Gastrocnemius medialis (tissue), 4 donors: ENCODE measurements at regions of chr21 and their contacts with region 1.

Region 1: DNA sequence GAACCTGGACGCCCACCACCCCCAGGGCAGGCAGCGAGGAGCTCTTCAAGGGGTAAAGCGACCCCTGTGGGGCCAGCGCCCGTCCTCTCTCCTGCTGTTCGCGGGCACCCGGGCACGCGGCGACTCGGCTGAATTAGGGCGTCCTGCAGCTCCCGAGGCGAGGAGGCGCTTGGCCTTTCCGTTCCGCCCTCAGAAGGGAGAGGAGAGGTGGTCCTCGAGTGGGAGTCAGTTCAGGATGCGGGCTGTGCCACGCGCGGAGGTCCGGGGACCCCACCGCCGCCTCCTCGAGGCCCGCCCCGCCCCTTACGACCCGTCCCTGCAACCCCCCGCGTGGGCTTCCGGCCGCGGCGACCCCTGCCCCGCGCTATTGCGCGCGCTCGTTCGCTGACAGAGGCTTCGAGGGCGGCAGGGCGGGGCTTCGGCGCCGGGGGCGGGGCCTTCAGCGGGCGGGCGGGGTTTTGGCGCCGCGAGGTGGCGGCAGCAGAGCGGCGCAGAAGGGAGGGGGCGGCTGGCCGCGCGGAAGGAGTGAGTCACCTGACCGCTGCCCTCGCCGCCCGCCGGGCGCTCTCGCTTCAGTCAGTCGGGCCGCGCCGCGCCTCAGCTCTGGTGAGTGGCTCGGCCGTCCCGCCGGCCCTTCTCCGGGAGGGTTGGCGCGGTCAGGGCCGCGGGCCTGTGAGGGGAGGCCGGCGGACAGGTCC is at the start of gene BACH1:
- DNase-seq: peak; percentile 76 to 89
- ATAC-seq: peak; percentile 69 to 72
- H3K4me3 ChIP-seq: peak within 1 kb of the TSS; percentile 69 to 87 (median 72)
- H3K27ac ChIP-seq: peak within 1 kb of the TSS; percentile 89 to 97 (median 94)
- H3K4me1 ChIP-seq: peaks cover 34 to 36% of the 10 kb centered on the region in 2 donors
- H3K27me3 ChIP-seq: no peaks in the 10 kb centered on the region
- CTCF ChIP-seq: peak in 3 of 5 experiments; percentile 55 to 69 (median 64)
- POLR2A ChIP-seq: peak; percentile 93 to 94
- total RNA-seq, gene BACH1: 52.4 to 72.7 (median 62.7) TPM

Region 2: GRCh38 chr21:28793043-28793442 is 505.5 kb before region 1 on chr21:
- in situ Hi-C with region 1: no loop called
- intact Hi-C with region 1: no loop called
- DNase-seq: no peak
- ATAC-seq: no peak
- H3K4me3 ChIP-seq: no peak overlapping the region
- H3K27ac ChIP-seq: no peak overlapping the region
- H3K4me1 ChIP-seq: no peaks in the 10 kb centered on the region
- H3K27me3 ChIP-seq: no peaks in the 10 kb centered on the region
- CTCF ChIP-seq: peak in 1 of 5 experiments; percentile 23
- POLR2A ChIP-seq: no peak

Region 3: GRCh38 chr21:29073222-29074006 is 225.1 kb before region 1 on chr21 and contains the start of gene CCT8:
- in situ Hi-C with region 1: loop called in 1 of 4 experiments (anchors 25 kb)
- intact Hi-C with region 1: loop called (anchors 5 kb)
- DNase-seq: peak; percentile 99
- ATAC-seq: peak; percentile 97
- H3K4me3 ChIP-seq: peak within 1 kb of the TSS; percentile 89 to 100 (median 100)
- H3K27ac ChIP-seq: peak within 1 kb of the TSS; percentile 94 to 99 (median 98)
- H3K4me1 ChIP-seq: peaks cover 27 to 29% of the 10 kb centered on the region in 2 donors
- H3K27me3 ChIP-seq: no peaks in the 10 kb centered on the region
- CTCF ChIP-seq: peak in 1 of 5 experiments; percentile 15
- POLR2A ChIP-seq: peak; percentile 71 to 83
- total RNA-seq, gene CCT8: 91.8 to 119 (median 99.1) TPM

Region 4: GRCh38 chr21:29085106-29085752 is 213.3 kb before region 1 on chr21:
- in situ Hi-C with region 1: loop called in 2 of 4 experiments (anchors 10 to 25 kb)
- intact Hi-C with region 1: loop called (anchors 5 kb)
- DNase-seq: no peak
- ATAC-seq: no peak
- H3K4me3 ChIP-seq: no peak overlapping the region
- H3K27ac ChIP-seq: no peak overlapping the region
- H3K4me1 ChIP-seq: no peaks in the 10 kb centered on the region
- H3K27me3 ChIP-seq: no peaks in the 10 kb centered on the region
- CTCF ChIP-seq: no peak
- POLR2A ChIP-seq: no peak

Region 5: DNA sequence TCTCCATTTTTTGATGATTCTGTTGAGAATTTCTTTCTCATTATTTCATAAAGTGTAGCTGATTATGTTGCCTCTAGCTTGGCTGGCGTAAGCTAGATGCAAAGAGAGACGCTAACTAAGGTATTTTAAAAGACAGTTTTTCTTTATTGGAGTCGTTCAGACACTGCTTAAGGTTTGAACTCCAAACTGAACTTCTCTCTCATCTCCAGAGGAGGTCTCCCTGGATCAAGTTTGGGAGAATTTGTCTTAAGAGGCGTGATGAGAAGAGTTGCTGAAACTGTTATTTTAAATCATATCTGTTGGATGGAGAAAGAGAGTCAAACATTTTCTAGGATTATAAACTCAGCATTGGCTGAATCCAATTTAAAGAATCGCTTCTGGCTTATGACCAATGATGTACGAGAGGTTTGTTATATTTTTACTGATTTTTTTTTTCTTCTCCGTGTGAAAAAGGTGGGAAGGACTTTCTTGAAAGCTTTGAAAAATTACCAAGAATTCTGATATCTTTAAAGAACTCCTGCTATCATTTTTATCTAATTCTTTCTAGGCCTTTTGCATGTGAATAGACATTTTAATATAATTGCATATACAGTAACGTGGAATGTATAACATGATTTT is 134.1 kb before region 1 on chr21:
- in situ Hi-C with region 1: loop called in 1 of 4 experiments (anchors 25 kb)
- intact Hi-C with region 1: no loop called
- DNase-seq: no peak
- ATAC-seq: peak; percentile 82 to 85
- H3K4me3 ChIP-seq: no peak overlapping the region
- H3K27ac ChIP-seq: peak overlapping the region in 1 of 4 donors; percentile 32
- H3K4me1 ChIP-seq: peaks cover 4 to 9% of the 10 kb centered on the region in 2 donors
- H3K27me3 ChIP-seq: no peaks in the 10 kb centered on the region
- CTCF ChIP-seq: peak in 4 of 5 experiments; percentile 51 to 66 (median 64)
- POLR2A ChIP-seq: no peak

Region 6: DNA sequence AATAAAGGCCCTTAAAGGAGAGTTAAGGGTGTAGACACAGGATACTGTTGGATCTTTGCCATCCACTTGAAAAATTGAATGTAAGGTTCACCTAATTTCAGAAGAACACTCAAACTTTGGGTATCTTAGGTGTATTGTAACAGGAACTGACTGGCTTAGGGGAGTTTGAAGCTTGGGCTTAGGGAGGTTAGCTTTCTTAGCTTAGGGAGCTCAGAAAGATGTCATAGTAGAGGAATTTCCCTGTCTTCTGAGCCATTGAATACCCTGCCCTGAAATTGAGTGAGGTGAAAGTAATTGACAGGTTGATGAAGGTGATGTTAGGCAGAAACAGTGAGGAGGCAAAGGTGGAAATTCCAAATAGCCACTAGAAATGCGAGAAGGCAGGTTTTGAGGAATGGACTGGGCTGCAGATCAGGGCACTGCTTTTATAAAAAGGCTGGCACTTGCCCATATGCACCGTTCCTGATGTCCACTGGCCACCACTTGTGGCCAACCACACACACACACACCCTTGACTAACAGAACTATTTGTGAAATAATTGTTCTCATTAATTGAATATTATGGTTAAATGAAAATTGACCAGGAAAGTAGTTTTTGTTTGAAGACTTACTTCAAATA is 16.7 kb after region 1 on chr21:
- in situ Hi-C with region 1: no loop called
- intact Hi-C with region 1: no loop called
- DNase-seq: no peak
- ATAC-seq: peak in 1 of 2 donors; percentile 58
- H3K4me3 ChIP-seq: peak overlapping the region in 1 of 4 donors; percentile 5
- H3K27ac ChIP-seq: peak overlapping the region; percentile 15 to 49 (median 34)
- H3K4me1 ChIP-seq: peaks cover 80 to 93% of the 10 kb centered on the region in 2 donors
- H3K27me3 ChIP-seq: no peaks in the 10 kb centered on the region
- CTCF ChIP-seq: no peak
- POLR2A ChIP-seq: no peak

Region 7: GRCh38 chr21:29326914-29327554 is 28.5 kb after region 1 on chr21:
- in situ Hi-C with region 1: no loop called
- intact Hi-C with region 1: loop called (anchors 1 kb)
- DNase-seq: peak; percentile 84 to 92
- ATAC-seq: peak; percentile 98
- H3K4me3 ChIP-seq: peak overlapping the region; percentile 46 to 65 (median 60)
- H3K27ac ChIP-seq: peak overlapping the region; percentile 85 to 92 (median 88)
- H3K4me1 ChIP-seq: peaks cover 39 to 67% of the 10 kb centered on the region in 2 donors
- H3K27me3 ChIP-seq: no peaks in the 10 kb centered on the region
- CTCF ChIP-seq: no peak
- POLR2A ChIP-seq: peak; percentile 77 to 91

Region 8: DNA sequence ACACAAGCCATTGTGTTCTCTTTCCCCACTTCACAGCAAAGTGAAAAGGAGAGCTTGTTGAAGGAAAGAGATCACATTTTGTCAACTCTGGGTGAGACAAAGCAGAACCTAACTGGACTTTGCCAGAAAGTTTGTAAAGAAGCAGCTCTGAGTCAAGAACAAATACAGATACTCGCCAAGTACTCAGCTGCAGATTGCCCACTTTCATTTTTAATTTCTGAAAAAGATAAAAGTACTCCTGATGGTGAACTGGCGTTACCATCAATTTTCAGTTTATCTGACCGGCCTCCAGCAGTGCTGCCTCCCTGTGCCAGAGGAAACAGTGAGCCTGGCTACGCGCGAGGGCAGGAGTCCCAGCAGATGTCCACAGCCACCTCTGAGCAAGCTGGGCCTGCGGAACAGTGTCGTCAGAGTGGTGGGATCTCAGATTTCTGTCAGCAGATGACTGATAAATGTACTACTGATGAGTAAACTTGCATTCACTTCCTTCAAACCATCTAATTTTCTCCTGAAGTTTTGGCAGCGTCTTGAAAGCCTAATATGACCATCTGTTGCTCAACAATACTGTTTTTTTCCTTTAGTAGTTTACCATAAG is 44.0 kb after region 1 on chr21:
- in situ Hi-C with region 1: no loop called
- intact Hi-C with region 1: loop called (anchors 1 kb)
- DNase-seq: peak; percentile 93 to 94
- ATAC-seq: peak; percentile 97 to 98
- H3K4me3 ChIP-seq: peak overlapping the region in 1 of 4 donors; percentile 1
- H3K27ac ChIP-seq: peak overlapping the region; percentile 82 to 90 (median 84)
- H3K4me1 ChIP-seq: peaks cover 62 to 83% of the 10 kb centered on the region in 2 donors
- H3K27me3 ChIP-seq: no peaks in the 10 kb centered on the region
- CTCF ChIP-seq: no peak
- POLR2A ChIP-seq: peak; percentile 29 to 41

Region 9: DNA sequence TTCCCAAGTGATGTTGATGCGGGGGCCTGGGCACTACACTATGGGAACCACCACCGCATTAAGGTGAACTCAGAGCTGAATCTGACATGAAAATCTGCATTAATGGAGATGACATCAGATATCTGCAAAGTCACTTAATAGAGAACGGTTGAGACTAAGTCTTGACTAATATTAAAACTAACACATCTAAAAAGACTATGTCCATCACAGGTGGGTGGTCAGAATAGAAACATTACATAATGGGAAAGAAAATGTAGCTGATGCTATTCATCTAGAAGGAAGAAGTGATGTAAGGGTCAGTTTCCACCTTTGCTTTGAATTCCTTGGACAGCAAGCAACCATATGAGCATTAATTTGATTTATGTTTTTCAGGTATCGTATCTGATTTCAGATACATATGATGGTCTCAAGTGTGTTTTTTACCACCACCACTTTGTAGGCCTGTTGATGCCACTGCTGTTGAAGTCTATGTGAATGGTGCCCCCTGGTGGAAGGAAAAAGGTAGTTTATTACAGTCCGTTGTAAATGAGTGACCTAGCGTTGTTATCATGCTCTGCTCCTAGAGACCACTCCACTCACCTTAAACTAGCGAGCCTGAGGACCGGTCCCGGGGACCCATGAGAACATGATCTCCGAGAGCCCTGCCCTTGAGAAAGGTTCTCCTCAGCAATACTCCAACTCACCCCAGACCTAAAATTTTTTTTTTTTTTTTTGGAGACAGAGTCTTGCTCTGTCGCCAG is 73.7 kb after region 1 on chr21:
- in situ Hi-C with region 1: loop called in 1 of 4 experiments (anchors 10 kb)
- intact Hi-C with region 1: loop called (anchors 1 kb)
- DNase-seq: peak; percentile 34 to 37
- ATAC-seq: peak; percentile 91 to 93
- H3K4me3 ChIP-seq: no peak overlapping the region
- H3K27ac ChIP-seq: no peak overlapping the region
- H3K4me1 ChIP-seq: peaks cover 0 to 5% of the 10 kb centered on the region in 2 donors
- H3K27me3 ChIP-seq: no peaks in the 10 kb centered on the region
- CTCF ChIP-seq: peak; percentile 77 to 88 (median 83)
- POLR2A ChIP-seq: no peak

Region 10: GRCh38 chr21:29557200-29557599 is 258.7 kb after region 1 on chr21:
- in situ Hi-C with region 1: no loop called
- intact Hi-C with region 1: no loop called
- DNase-seq: no peak
- ATAC-seq: no peak
- H3K4me3 ChIP-seq: no peak overlapping the region
- H3K27ac ChIP-seq: no peak overlapping the region
- H3K4me1 ChIP-seq: no peaks in the 10 kb centered on the region
- H3K27me3 ChIP-seq: no peaks in the 10 kb centered on the region
- CTCF ChIP-seq: no peak
- POLR2A ChIP-seq: no peak